ENCODE measurements at regions of chr16 and their contacts with region 1.

Region 1: DNA sequence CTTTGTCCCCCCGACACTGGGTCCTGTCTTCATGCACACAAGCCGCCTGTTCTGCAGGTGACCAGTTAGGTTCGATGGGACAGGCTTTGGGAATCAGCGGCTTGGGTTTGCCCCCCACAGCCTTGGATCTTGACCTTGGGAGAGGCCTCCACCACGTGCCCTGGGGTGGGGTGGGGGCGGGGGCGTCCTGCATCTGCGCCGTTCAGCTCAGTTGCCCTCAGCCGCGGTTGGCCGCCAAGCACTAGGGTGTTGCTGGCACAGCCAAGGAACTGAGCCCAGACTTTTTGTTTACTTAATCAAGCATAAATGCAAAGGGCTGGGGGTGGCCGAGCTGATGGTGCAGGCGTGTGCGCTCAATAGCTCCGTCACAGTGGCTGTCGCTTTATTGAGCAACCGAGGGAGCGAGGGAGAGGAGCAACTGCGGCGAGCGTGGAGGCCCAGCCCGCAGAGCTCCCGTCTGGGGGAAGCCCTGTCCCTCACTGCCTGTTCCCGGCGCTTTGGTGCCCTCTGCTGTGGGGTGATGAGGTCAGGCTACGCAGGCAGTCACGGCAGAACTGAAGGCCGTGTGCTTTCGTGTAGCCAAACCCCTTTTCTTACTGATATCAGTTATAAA is 33.9 kb downstream of the JPH3 start:
- DNase-seq: peak; percentile 31 to 85
- H3K4me3 ChIP-seq: peak overlapping the region; percentile 26 to 31
- H3K27ac ChIP-seq: no peak overlapping the region
- H3K4me1 ChIP-seq: peaks cover 3 to 10% of the 10 kb centered on the region in 2 donors
- H3K27me3 ChIP-seq: no peaks in the 10 kb centered on the region
- CTCF ChIP-seq: peak; percentile 57 to 81 (median 77)

Region 2: GRCh38 chr16:86029131-86029741 is 1606.9 kb before region 1 on chr16:
- intact Hi-C with region 1: no loop called
- DNase-seq: no peak
- H3K4me3 ChIP-seq: no peak overlapping the region
- H3K27ac ChIP-seq: no peak overlapping the region
- H3K4me1 ChIP-seq: no peaks in the 10 kb centered on the region
- H3K27me3 ChIP-seq: no peaks in the 10 kb centered on the region
- CTCF ChIP-seq: no peak

Region 3: GRCh38 chr16:87324411-87325275 is 311.5 kb before region 1 on chr16:
- intact Hi-C with region 1: loop called (anchors 10 kb)
- DNase-seq: peak in 1 of 2 donors; percentile 63
- H3K4me3 ChIP-seq: no peak overlapping the region
- H3K27ac ChIP-seq: no peak overlapping the region
- H3K4me1 ChIP-seq: peaks cover 0 to 3% of the 10 kb centered on the region in 2 donors
- H3K27me3 ChIP-seq: no peaks in the 10 kb centered on the region
- CTCF ChIP-seq: peak; percentile 37 to 82 (median 78)

Region 4: GRCh38 chr16:87416826-87417527 is 219.2 kb before region 1 on chr16:
- intact Hi-C with region 1: loop called (anchors 2 kb)
- DNase-seq: no peak
- H3K4me3 ChIP-seq: no peak overlapping the region
- H3K27ac ChIP-seq: no peak overlapping the region
- H3K4me1 ChIP-seq: no peaks in the 10 kb centered on the region
- H3K27me3 ChIP-seq: no peaks in the 10 kb centered on the region
- CTCF ChIP-seq: peak; percentile 32 to 70 (median 57)

Region 5: GRCh38 chr16:87550496-87550961 is 85.6 kb before region 1 on chr16:
- intact Hi-C with region 1: loop called (anchors 1 kb)
- DNase-seq: no peak
- H3K4me3 ChIP-seq: no peak overlapping the region
- H3K27ac ChIP-seq: no peak overlapping the region
- H3K4me1 ChIP-seq: no peaks in the 10 kb centered on the region
- H3K27me3 ChIP-seq: no peaks in the 10 kb centered on the region
- CTCF ChIP-seq: peak; percentile 87 to 98 (median 97)

Region 6: DNA sequence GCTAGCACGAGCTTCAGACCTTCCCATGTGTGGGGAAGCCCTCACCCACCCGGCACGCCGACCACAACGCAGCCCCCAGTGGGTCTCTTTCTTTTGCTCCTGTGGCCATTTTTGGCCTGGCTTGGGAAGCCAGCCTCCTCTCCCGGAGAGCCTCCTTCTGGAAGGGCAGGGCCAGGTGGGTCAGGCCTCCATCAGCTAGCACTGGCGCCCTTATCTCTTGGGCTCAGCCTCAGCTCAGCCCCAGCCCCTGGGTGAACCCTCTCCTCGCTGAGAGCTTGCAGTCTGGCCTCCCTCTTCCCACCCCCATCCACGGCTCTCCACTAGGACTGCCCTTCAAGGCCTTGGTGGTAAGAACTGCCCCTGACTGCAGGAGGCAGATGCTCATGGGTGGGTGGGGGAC is 48.5 kb before region 1 on chr16:
- intact Hi-C with region 1: loop called (anchors 1 kb)
- DNase-seq: no peak
- H3K4me3 ChIP-seq: no peak overlapping the region
- H3K27ac ChIP-seq: no peak overlapping the region
- H3K4me1 ChIP-seq: peaks cover 4 to 14% of the 10 kb centered on the region in 2 donors
- H3K27me3 ChIP-seq: no peaks in the 10 kb centered on the region
- CTCF ChIP-seq: no peak

Measured in ascending aorta (tissue), 2 donors.